HEK293 (cell line): ENCODE measurements at regions of chr10 and their contacts with region 1.

Region 1: DNA sequence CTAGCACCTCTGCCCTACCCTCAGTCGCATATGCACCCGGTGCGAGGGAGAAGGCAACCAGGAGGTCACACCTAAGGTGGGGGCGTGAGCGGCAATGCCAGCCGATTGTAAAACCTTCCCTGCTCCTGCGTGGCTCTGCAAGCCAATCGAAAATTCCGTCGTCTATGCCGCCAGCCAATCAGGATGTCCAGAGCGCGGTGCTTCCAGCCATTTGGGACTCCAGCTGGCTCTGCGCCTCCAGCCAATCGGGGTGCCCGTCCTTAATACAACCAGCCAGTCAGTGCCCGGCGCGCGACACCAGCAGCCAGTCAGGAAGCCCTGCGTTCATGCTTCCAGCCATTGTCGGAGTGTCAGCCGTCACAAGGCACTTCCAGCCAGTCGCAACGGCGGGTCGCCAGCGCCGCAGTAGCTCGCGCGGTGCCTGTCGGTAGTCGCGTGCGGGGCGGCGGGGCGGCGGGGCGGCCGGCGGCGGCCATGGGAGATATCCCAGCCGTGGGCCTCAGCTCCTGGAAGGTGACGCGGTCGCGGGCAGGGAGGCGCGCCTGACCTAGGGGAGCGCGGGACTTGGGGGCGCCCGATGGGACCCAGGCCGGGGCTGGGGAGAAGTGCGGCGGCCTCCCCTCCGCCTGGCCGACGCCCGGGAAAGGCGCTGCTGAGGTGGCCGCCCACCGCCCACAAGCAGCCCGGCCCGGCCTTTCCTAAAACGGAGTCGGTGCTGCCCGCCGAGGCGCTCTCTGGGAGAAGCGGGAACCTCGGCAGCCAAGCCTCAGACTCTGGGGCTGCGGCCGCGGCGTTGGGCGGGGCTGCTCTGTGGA is at the start of gene AKR1E2:
- H3K4me3 ChIP-seq: no peak within 1 kb of the TSS; the same call in 1 of the 2 replicates
- H3K27ac ChIP-seq: no peak within 1 kb of the TSS
- H3K4me1 ChIP-seq: no peaks in the 10 kb centered on the region
- CTCF ChIP-seq: no peak

Region 2: DNA sequence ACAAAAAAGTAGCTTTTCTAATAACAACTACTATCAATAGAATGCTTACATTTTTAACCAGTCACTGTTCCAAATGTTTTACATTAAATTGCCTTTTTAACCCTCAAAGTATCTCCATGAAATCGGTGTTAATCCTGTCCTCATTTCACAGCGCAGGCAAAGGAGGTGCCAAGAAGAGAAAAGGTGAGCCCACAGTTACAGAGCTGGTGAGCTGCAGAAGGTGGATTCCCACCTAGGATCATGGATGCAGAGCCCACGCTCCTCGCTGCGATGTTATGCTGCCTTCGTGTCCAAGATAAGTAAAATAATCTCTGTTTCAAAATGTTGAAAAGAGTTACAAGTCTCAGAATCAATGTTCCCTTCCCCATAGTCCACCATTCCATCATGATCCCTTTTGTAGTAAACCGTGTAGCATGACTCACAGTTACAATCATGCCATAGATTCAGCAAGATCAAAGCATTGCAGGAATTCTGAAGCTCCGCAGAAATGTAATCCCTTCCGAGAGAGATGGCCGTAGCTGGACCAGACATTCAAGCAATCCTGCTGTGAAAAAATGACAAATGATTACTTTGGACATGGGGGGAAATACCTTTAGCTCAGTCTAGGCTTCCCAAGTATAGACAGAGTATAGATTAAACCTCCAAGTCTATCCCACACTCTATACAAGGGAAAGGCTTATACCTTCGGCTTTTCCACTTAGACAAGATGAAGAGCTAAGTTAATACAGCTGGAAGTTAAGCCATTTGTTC is 394.8 kb before region 1 on chr10:
- CTCF ChIA-PET with region 1: no interaction called
- POLR2A ChIA-PET with region 1: no interaction called
- H3K4me3 ChIP-seq: no peak overlapping the region
- H3K27ac ChIP-seq: no peak overlapping the region
- H3K4me1 ChIP-seq: no peaks in the 10 kb centered on the region
- CTCF ChIP-seq: no peak

Region 3: GRCh38 chr10:4813023-4813422 is 13.0 kb before region 1 on chr10:
- CTCF ChIA-PET with region 1: interaction called, 13 read pairs
- POLR2A ChIA-PET with region 1: no interaction called
- H3K4me3 ChIP-seq: no peak overlapping the region
- H3K27ac ChIP-seq: no peak overlapping the region
- H3K4me1 ChIP-seq: no peaks in the 10 kb centered on the region
- CTCF ChIP-seq: no peak